Caco-2 (cell line): ENCODE measurements at regions of chr12 and their contacts with region 1.

Region 1: DNA sequence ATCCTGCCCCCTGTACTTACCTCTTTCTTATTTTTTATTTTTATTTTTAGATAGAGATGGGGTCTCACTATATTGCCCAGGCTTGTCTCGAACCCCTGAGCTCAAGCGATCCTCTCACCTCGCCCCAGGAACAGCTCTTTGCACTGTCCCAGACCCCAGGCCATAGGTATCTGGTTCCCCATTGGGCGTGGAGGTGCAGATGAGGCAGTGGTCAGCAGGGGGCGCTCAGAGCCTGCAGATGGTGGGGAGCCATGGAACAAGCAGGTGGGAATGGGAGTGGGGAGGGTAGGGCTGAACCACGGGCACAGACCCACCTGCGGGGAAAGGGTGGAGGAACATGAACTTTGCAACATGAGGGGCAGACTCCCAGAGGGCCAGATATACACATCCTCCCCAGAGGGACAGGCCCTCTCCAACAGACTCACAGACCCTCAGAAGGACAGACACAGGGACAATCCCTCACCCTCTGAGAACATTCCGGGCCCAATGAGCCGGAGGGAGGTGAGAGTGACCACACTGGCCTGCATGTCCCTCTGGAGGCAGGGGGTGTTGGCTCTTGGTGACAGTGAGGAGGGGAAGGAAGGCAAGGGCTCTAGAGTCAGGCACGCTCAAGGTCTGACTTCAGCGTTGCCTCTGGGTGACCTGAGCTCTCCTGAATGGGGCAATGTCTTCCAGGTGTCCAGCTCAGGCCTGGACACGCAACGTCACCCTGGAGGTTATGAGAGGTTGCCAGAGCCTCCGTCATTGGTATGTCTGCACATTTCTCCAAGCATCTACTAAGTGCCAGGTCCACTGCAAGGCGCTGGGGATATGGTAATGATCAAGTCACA is 34.9 kb downstream of the KRT80 start:
- DNase-seq: peak; percentile 82 to 88
- H3K4me3 ChIP-seq: no peak overlapping the region
- H3K4me3 Mint-ChIP-seq: no peak overlapping the region
- H3K27ac Mint-ChIP-seq: no peak overlapping the region
- H3K4me1 ChIP-seq: peaks cover 5% of the 10 kb centered on the region; the same call in 1 of the 2 replicates
- H3K4me1 Mint-ChIP-seq: no peaks in the 10 kb centered on the region
- H3K27me3 ChIP-seq: no peaks in the 10 kb centered on the region
- H3K27me3 Mint-ChIP-seq: no peaks in the 10 kb centered on the region
- CTCF ChIP-seq: peak; percentile 94 to 95

Region 2: GRCh38 chr12:52069327-52070184 is 87.4 kb before region 1 on chr12 and contains the start of gene ATG101:
- CTCF ChIA-PET with region 1: no interaction called
- POLR2A ChIA-PET with region 1: no interaction called
- intact Hi-C with region 1: no loop called
- DNase-seq: peak; percentile 96
- H3K4me3 ChIP-seq: peak within 1 kb of the TSS; percentile 80
- H3K4me3 Mint-ChIP-seq: peak within 1 kb of the TSS; percentile 85
- H3K27ac Mint-ChIP-seq: peak within 1 kb of the TSS; percentile 100
- H3K4me1 ChIP-seq: peaks cover 12% of the 10 kb centered on the region
- H3K4me1 Mint-ChIP-seq: peaks cover 30% of the 10 kb centered on the region
- H3K27me3 ChIP-seq: no peaks in the 10 kb centered on the region
- H3K27me3 Mint-ChIP-seq: no peaks in the 10 kb centered on the region
- CTCF ChIP-seq: peak; percentile 47 to 97
- total RNA-seq, gene ATG101: 67.2 and 78.0 TPM in 2 replicates

Region 3: GRCh38 chr12:52307836-52308805 is 151.2 kb after region 1 on chr12:
- CTCF ChIA-PET with region 1: interaction called, 3 read pairs
- POLR2A ChIA-PET with region 1: no interaction called
- intact Hi-C with region 1: loop called (anchors 5 kb)
- DNase-seq: peak; percentile 77 to 86
- H3K4me3 ChIP-seq: peak overlapping the region; percentile 51
- H3K4me3 Mint-ChIP-seq: peak overlapping the region; percentile 67
- H3K27ac Mint-ChIP-seq: peak overlapping the region; percentile 2
- H3K4me1 ChIP-seq: peaks cover 6% of the 10 kb centered on the region; the same call in 1 of the 2 replicates
- H3K4me1 Mint-ChIP-seq: peaks cover 7% of the 10 kb centered on the region
- H3K27me3 ChIP-seq: no peaks in the 10 kb centered on the region
- H3K27me3 Mint-ChIP-seq: peaks cover 2% of the 10 kb centered on the region
- CTCF ChIP-seq: peak; percentile 10 to 15

Region 4: DNA sequence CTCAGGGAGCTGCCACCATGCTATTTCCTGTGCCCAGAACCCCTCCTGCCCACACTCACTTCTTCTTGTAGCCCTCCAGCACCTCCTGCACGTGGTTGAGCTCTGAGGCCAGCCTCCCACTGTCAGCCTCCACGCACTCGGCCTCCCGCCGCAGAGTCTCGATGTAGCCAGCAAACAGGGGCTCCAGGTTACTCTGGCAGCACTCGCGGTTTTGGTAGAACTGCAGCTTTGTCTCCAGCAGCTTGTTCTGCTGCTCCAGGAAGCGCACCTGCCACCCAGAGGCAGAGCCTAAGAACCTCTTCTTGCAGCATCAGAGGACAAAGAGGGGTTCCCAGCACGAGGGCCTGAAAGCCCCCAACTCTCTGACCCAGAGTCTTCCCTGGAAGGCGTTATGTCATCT is 162.1 kb after region 1 on chr12:
- CTCF ChIA-PET with region 1: interaction called, 11 read pairs
- POLR2A ChIA-PET with region 1: no interaction called
- intact Hi-C with region 1: no loop called
- DNase-seq: peak in 1 of 2 experiments; percentile 35
- H3K4me3 ChIP-seq: no peak overlapping the region
- H3K4me3 Mint-ChIP-seq: no peak overlapping the region
- H3K27ac Mint-ChIP-seq: no peak overlapping the region
- H3K4me1 ChIP-seq: no peaks in the 10 kb centered on the region
- H3K4me1 Mint-ChIP-seq: peaks cover 6% of the 10 kb centered on the region
- H3K27me3 ChIP-seq: no peaks in the 10 kb centered on the region; the same call in 1 of the 2 replicates
- H3K27me3 Mint-ChIP-seq: peaks cover 2% of the 10 kb centered on the region
- CTCF ChIP-seq: peak; percentile 22 to 35

Region 5: DNA sequence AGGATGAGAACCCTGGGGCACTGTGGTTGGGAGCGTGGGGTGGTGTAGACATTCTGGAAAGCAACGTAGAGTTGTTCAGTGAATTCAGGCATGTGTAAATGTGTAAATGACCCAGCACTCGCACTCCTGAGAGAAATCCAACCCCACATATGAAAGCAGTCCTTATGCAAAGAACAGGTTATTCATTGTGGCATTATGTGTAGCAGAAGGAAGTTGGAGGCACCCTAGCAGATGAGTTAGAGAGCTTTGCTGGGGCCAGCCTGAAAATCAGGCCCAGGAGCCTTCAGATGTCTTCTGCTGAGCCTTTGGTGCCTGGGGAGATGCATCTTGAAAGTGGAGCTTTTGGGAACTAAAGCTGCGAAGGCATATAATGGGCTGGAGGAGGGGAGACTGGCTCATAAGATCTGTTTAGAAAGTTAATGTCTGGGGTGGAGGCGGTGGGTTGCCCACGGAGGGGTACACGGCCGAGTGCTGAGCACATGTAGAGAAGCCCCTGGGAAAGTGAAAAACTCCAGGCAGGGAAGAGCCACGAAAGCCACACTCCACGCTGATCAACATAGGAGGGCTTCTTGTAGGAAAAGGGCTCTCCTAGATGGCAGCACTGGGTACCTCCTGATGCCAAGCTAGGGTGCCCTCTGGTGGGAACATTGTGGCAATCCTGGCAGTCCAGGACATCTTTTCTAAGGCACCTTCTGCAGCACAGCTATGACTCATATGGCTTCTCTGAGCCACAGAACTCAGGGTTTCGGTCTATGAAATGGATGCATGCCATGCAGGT is 170.3 kb after region 1 on chr12:
- CTCF ChIA-PET with region 1: interaction called, 21 read pairs
- POLR2A ChIA-PET with region 1: no interaction called
- intact Hi-C with region 1: loop called (anchors 1 kb)
- DNase-seq: peak; percentile 80 to 81
- H3K4me3 ChIP-seq: no peak overlapping the region
- H3K4me3 Mint-ChIP-seq: no peak overlapping the region
- H3K27ac Mint-ChIP-seq: no peak overlapping the region
- H3K4me1 ChIP-seq: no peaks in the 10 kb centered on the region
- H3K4me1 Mint-ChIP-seq: no peaks in the 10 kb centered on the region
- H3K27me3 ChIP-seq: no peaks in the 10 kb centered on the region; the same call in none of the 2 replicates
- H3K27me3 Mint-ChIP-seq: peaks cover 2% of the 10 kb centered on the region
- CTCF ChIP-seq: peak; percentile 66 to 92

Region 6: GRCh38 chr12:52506858-52507715 is 350.1 kb after region 1 on chr12:
- CTCF ChIA-PET with region 1: no interaction called
- POLR2A ChIA-PET with region 1: no interaction called
- intact Hi-C with region 1: loop called (anchors 1 kb)
- DNase-seq: peak in 1 of 2 experiments; percentile 40
- H3K4me3 ChIP-seq: no peak overlapping the region
- H3K4me3 Mint-ChIP-seq: no peak overlapping the region
- H3K27ac Mint-ChIP-seq: no peak overlapping the region
- H3K4me1 ChIP-seq: no peaks in the 10 kb centered on the region
- H3K4me1 Mint-ChIP-seq: no peaks in the 10 kb centered on the region
- H3K27me3 ChIP-seq: no peaks in the 10 kb centered on the region
- H3K27me3 Mint-ChIP-seq: peaks cover 17% of the 10 kb centered on the region
- CTCF ChIP-seq: peak; percentile 54 to 68

Region 7: DNA sequence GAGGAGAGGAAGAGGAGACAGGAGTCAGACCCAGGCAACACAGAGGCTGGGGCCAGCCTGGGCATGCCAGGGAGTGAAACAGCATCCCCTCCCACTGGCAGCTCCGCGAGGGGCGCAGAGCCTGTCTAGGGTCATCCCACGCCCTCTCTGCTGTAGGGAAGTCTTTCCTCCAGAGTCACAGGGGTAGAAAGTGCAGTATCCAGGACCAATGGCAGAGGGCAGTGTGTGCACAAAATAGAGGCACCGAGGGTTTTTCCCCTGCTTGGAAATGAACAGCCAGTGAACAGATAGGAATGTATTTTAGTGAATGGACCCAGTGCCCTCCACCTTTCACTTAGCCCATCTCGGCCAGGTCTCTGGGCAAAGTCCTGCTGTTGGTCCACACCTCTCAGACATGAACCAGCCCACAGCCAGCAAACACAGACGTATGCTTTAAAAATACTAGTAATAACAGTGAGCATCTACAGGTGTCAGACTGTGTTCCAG is 426.1 kb after region 1 on chr12:
- CTCF ChIA-PET with region 1: no interaction called
- POLR2A ChIA-PET with region 1: no interaction called
- intact Hi-C with region 1: loop called (anchors 2 kb)
- DNase-seq: peak; percentile 60 to 74
- H3K4me3 ChIP-seq: no peak overlapping the region
- H3K4me3 Mint-ChIP-seq: no peak overlapping the region
- H3K27ac Mint-ChIP-seq: no peak overlapping the region
- H3K4me1 ChIP-seq: peaks cover 11% of the 10 kb centered on the region; the same call in 1 of the 2 replicates
- H3K4me1 Mint-ChIP-seq: no peaks in the 10 kb centered on the region
- H3K27me3 ChIP-seq: no peaks in the 10 kb centered on the region
- H3K27me3 Mint-ChIP-seq: peaks cover 4% of the 10 kb centered on the region
- CTCF ChIP-seq: peak; percentile 62 to 75

Region 8: DNA sequence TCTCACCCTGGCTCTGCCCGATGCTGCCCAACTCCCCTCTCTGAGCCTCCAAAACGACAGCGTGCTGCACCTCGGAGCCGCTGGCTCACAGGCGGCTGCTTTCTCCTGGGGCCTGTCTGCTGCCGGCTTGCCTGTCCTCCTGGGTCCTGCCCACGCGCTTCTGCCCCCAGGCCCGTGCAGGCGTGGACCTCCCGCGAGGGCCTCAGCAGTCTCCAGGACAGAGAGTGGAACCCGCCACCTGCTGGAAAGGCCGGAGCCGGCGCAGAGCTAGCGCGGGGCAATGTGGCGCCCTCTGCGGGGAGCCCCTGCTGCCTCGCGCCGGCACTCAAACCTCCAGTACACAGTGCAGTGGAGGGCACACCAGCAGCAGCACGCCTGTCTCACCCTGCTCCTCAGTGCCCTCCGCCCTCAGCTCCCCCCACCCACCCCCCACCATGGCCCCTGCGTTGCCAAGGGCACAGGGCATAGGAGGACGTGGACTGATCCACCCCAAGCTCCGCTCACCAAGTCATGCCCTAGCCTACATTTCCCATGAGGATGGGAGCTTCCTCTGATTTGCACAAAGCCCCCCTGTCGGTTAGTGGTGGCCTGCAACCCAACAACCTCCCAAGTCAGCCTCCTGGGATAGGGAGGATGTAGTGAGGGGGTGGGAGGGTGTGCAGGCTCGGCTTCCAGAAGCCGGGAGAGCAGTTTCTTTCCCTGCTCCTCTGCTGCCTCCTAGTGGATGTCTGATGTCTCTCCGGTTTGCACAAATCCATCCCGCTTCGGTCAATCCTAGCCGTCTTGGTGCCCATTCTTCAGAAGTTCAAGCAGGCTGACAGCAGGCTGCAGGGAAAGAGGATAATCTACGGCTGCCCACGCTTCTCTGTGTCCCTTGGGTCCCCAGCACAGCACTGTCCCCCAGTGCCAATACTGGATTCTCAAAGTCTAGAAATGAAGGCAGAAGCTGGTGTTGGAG is 722.7 kb after region 1 on chr12:
- CTCF ChIA-PET with region 1: no interaction called
- POLR2A ChIA-PET with region 1: no interaction called
- intact Hi-C with region 1: loop called (anchors 1 kb)
- DNase-seq: peak; percentile 88 to 90
- H3K4me3 ChIP-seq: no peak overlapping the region
- H3K4me3 Mint-ChIP-seq: peak overlapping the region; percentile 45
- H3K27ac Mint-ChIP-seq: no peak overlapping the region
- H3K4me1 ChIP-seq: peaks cover 27% of the 10 kb centered on the region
- H3K4me1 Mint-ChIP-seq: peaks cover 10% of the 10 kb centered on the region
- H3K27me3 ChIP-seq: no peaks in the 10 kb centered on the region
- H3K27me3 Mint-ChIP-seq: no peaks in the 10 kb centered on the region
- CTCF ChIP-seq: peak; percentile 76 to 88